ENCODE measurements at regions of chr2 and their contacts with region 1.

Region 1: DNA sequence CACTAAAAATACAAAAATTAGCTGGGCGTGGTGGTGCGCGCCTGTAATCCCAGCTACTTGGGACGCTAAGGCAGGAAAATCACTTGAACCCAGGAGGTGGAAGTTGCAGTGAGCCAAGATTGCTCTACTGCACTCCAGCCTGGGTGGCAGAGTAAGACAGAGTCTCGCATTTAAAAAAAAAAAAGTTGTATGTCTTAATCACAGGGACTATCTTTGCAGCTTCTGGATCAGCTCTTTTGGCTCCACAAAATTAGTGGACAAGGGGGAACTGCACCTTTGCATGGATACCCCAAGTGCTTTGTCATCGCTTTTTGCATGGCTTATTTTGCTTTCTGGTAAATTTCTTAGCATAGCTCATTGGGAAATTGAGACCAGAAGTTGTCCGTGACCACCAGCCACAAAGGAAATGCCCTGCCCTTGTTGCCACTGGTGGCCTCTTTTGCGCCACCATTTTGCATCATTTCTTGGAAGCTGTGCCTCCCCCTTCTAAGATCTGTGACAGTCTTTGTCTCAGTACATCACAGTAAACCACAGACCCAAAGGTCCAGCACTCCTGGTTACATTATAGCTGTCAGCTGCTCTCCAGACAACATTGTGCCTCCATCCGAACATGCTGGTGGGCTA is 43.9 kb upstream of the PCBP1 start:
- DNase-seq: no peak

Region 2: DNA sequence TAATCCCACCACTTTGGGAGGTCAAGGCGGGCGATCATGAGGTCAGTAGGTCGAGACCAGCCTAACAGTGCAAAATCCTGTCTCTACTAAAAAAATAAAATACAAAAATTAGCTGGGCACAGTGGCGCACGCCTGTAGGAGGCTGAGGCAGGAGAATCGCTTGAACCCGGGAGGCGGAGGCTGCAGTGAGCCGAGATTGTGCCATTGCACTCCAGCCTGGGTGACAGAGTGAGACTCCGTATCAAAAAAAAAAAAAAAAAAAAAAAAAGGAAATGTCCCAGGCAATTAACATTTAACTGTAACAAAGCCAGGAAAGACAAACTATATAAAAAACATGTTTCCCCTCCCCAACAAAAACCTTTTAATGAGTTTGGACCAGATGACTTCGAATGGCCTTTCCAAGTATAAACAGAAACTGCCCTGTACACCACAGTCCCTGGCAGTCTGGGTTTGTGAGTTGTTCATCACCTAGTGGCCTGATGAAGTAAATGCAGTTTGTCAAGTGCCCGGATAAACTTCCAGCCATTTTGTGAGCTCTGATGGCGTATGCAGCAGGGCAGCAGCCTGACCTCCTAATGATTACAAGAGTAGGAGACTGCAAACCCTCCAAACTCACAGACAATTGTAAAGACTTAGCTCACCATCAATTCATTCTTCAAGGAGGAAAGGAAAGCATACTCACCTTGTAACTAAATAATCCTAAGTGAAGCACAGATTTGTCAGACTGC is 27.3 kb after region 1 on chr2:
- intact Hi-C with region 1: no loop called
- DNase-seq: no peak

Region 3: DNA sequence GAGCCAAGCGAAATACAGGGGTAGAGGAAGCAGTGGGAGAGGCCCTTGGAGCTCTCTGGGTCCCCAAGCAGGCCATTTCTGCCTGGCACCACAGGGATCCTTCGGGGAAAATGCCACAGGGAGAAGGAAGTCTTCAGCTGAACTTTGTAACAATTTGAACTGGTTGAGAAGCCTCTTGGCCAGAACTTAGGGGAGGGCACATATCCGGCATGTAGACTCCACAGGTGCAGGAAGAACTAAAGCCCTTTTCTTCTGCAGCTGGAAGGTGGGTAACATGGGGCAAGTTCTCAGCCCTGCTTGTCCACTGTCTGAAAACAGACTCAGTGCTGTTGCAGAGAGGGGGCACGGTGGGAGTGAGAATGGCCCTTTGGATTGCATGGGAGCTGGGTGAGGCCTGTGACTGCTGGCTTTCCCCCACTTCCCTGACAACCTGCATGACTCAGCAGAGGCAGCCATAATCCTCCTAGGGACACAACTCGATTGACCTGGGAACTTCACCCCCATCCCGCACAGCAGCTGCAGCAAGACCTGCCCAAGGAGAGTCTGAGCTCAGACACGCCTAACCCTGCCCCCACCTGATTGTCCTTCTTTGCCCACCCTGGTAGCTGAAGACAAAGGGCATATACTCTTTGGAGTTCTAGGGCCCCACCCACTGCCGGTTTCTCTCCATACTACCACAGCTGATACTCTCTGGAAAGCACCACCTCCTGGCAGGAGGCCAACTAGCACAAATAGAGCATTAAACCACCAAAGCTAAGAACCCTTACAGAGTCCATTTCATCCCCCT is 360.1 kb after region 1 on chr2:
- intact Hi-C with region 1: loop called in 1 of 2 experiments (anchors 5 kb)
- DNase-seq: no peak